H1 (cell line): ENCODE measurements at regions of chr17 and their contacts with region 1.

Region 1: GRCh38 chr17:2336215-2336851 is at the start of gene TSR1:
- DNase-seq: peak; percentile 67 to 91
- H3K4me3 ChIP-seq: peak within 1 kb of the TSS; percentile 92 to 96 (median 94)
- H3K27ac ChIP-seq: peak within 1 kb of the TSS; percentile 72
- H3K4me1 ChIP-seq: peaks cover 3 to 30% (median 13%) of the 10 kb centered on the region in 4 experiments; a peak in 6 of 7 replicates
- H3K27me3 ChIP-seq: no peaks in the 10 kb centered on the region
- CTCF ChIP-seq: peak in 1 of 3 experiments; percentile 12; a peak in 1 of 4 replicates
- EP300 ChIP-seq: peak in 1 of 2 experiments; percentile 31; a peak in 1 of 3 replicates
- POLR2A ChIP-seq: peak; percentile 73 to 89; a peak in 2 of 3 replicates
- RAD21 ChIP-seq: no peak; a peak in 1 of 4 replicates
- total RNA-seq, gene TSR1: 69.7 and 77.0 TPM in 2 replicates

Region 2: DNA sequence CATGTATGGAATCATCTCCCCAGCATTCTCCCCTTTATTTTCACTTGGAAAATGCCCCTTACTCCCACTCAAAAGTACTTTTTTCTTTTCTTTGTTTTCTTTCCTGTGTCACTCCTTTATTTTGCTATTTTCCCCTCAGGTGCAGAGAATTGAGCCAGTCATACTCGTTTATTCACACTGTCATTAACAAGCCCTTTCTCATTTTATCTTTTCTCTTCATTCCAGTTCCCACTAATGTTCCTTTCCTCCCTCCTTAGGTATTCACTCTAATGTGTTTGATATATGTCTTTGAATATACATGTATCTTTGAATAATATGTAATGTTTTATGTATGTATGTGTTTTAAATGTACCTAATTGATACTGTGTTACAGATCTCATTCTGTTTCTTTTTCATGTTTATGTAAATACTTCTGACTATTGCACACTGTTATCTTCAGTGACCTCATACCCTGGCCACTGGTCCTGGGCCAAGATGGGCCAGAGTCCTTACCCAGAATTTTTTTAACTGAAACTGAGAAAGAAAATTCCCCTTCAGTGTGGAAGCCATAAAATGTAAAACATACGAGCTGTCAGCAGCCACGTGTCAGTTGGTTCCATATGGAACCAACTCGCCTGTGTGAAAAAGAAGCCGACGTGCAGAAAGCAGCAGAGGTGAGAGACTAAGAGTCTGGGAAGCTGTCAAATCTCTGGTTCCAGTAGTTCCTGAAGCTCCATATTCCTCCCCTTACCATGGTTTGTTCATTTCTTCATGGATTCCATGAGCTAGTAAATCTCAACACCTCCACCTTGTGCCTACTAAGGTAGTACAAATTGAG is 26.8 kb before region 1 on chr17:
- CTCF ChIA-PET with region 1: no interaction called
- POLR2A ChIA-PET with region 1: interaction called, 230 read pairs
- DNase-seq: no peak
- H3K4me3 ChIP-seq: no peak overlapping the region
- H3K27ac ChIP-seq: no peak overlapping the region
- H3K4me1 ChIP-seq: no peaks in the 10 kb centered on the region
- H3K27me3 ChIP-seq: no peaks in the 10 kb centered on the region
- CTCF ChIP-seq: no peak
- EP300 ChIP-seq: no peak
- POLR2A ChIP-seq: no peak
- RAD21 ChIP-seq: no peak

Region 3: DNA sequence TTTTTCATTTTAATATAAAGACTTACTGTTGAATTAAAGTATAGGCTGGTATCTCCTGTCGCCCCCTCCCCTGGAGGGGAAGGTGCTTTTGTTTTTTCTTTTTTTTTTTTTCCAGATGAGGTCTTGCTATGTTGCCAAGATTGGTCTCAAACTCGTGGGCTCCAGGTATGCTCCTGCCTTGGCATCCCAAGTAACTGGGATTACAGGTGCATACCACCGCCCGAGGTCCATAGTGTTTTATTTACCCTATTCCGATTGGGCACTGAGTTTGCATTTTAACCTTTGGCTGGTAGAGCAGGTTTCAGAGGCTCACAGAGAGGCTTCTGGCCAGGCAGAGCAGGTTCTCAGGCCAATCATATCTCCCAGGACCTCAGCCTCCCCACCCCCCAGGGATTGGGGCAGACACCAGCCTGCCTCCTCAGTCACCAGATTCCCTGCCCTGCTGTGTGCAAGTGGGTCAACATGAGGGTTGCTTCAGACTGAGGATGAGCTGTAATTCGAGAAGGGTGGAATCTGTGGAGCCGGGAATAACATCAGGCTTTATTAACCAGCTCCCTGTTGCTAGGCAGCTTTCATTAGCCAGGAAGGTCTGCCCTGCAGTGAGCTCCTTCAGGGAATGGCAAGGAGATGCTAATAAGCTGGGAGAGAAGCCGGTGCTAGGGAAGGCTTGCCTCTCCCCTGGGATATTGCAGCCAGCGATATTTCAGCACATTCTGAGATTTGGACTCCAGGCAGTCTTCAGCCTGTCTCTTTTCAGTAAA is 11.4 kb after region 1 on chr17:
- CTCF ChIA-PET with region 1: interaction called, 69 read pairs
- POLR2A ChIA-PET with region 1: interaction called, 148 read pairs
- DNase-seq: peak; percentile 83 to 89
- H3K4me3 ChIP-seq: peak overlapping the region in 3 of 4 experiments; percentile 22 to 48 (median 37); a peak in 5 of 8 replicates
- H3K27ac ChIP-seq: peak overlapping the region; percentile 89
- H3K4me1 ChIP-seq: peaks cover 4 to 21% (median 7%) of the 10 kb centered on the region in 4 experiments
- H3K27me3 ChIP-seq: no peaks in the 10 kb centered on the region
- CTCF ChIP-seq: no peak
- EP300 ChIP-seq: peak in 1 of 2 experiments; percentile 74; a peak in 1 of 3 replicates
- POLR2A ChIP-seq: peak; percentile 70 to 72
- RAD21 ChIP-seq: no peak

Region 4: GRCh38 chr17:2369551-2370210 is 33.3 kb after region 1 on chr17:
- CTCF ChIA-PET with region 1: interaction called, 14 read pairs
- POLR2A ChIA-PET with region 1: interaction called, 25 read pairs
- DNase-seq: peak in 1 of 2 experiments; percentile 77
- H3K4me3 ChIP-seq: no peak overlapping the region
- H3K27ac ChIP-seq: no peak overlapping the region
- H3K4me1 ChIP-seq: peaks cover 0 to 12% (median 5%) of the 10 kb centered on the region in 4 experiments; a peak in 3 of 7 replicates
- H3K27me3 ChIP-seq: no peaks in the 10 kb centered on the region
- CTCF ChIP-seq: peak; percentile 45 to 54 (median 48)
- EP300 ChIP-seq: no peak
- POLR2A ChIP-seq: no peak
- RAD21 ChIP-seq: peak; percentile 53 to 64

Region 5: GRCh38 chr17:2386400-2387085 is 50.2 kb after region 1 on chr17:
- CTCF ChIA-PET with region 1: interaction called, 10 read pairs
- POLR2A ChIA-PET with region 1: interaction called, 4 read pairs
- DNase-seq: no peak
- H3K4me3 ChIP-seq: no peak overlapping the region
- H3K27ac ChIP-seq: no peak overlapping the region
- H3K4me1 ChIP-seq: peaks cover 0 to 15% (median 7%) of the 10 kb centered on the region in 4 experiments; a peak in 5 of 7 replicates
- H3K27me3 ChIP-seq: no peaks in the 10 kb centered on the region
- CTCF ChIP-seq: no peak
- EP300 ChIP-seq: no peak
- POLR2A ChIP-seq: no peak
- RAD21 ChIP-seq: no peak

Region 6: GRCh38 chr17:2468270-2468669 is 131.9 kb after region 1 on chr17:
- CTCF ChIA-PET with region 1: no interaction called
- POLR2A ChIA-PET with region 1: no interaction called
- DNase-seq: no peak
- H3K4me3 ChIP-seq: no peak overlapping the region
- H3K27ac ChIP-seq: no peak overlapping the region
- H3K4me1 ChIP-seq: no peaks in the 10 kb centered on the region
- H3K27me3 ChIP-seq: no peaks in the 10 kb centered on the region
- CTCF ChIP-seq: no peak
- EP300 ChIP-seq: no peak
- POLR2A ChIP-seq: no peak
- RAD21 ChIP-seq: no peak